ENCODE measurements at regions of chr13 and their contacts with region 1.

Region 1: GRCh38 chr13:24053519-24054251 is 106.8 kb upstream of the SPATA13 start:
- DNase-seq: peak; percentile 40 to 72
- ATAC-seq: peak; percentile 96 to 99
- H3K4me3 ChIP-seq: no peak overlapping the region
- H3K27ac ChIP-seq: peak overlapping the region in 1 of 2 experiments; percentile 46; a peak in 1 of 6 replicates
- H3K4me1 ChIP-seq: peaks cover 12% of the 10 kb centered on the region
- CTCF ChIP-seq: peak; percentile 59
- EP300 ChIP-seq: no peak
- POLR2A ChIP-seq: no peak
- RAD21 ChIP-seq: peak; percentile 83 to 86

Region 2: GRCh38 chr13:23828866-23829265 is 224.8 kb before region 1 on chr13:
- CTCF ChIA-PET with region 1: no interaction called
- POLR2A ChIA-PET with region 1: no interaction called
- DNase-seq: no peak
- ATAC-seq: no peak
- H3K4me3 ChIP-seq: no peak overlapping the region
- H3K27ac ChIP-seq: no peak overlapping the region
- H3K4me1 ChIP-seq: no peaks in the 10 kb centered on the region
- CTCF ChIP-seq: no peak
- EP300 ChIP-seq: no peak
- POLR2A ChIP-seq: no peak
- RAD21 ChIP-seq: no peak

Region 3: DNA sequence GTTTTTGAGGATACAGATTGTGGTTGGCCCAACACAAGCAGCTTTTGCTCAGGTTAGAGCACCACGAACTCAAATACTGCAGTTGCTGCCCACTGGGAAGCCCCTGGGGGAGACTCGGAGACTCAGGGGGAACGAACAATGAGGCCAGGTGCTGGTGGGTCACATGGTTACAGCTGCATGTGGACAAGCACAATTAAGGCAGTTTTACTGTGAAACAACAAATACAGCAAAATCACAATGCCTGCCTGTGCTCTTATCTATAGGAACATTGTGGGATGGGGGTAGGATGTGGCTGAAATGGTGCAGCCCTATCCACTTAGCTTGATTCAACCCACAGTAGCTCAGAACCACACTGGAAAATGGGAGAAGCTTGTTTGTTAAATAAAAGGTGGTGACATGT is 12.8 kb before region 1 on chr13:
- CTCF ChIA-PET with region 1: interaction called, 18 read pairs
- POLR2A ChIA-PET with region 1: no interaction called
- DNase-seq: no peak
- ATAC-seq: no peak
- H3K4me3 ChIP-seq: no peak overlapping the region
- H3K27ac ChIP-seq: no peak overlapping the region
- H3K4me1 ChIP-seq: peaks cover 4% of the 10 kb centered on the region; the same call in 1 of the 3 replicates
- CTCF ChIP-seq: no peak
- EP300 ChIP-seq: no peak
- POLR2A ChIP-seq: no peak
- RAD21 ChIP-seq: no peak

Region 4: GRCh38 chr13:24220086-24220703 is 166.5 kb after region 1 on chr13:
- CTCF ChIA-PET with region 1: interaction called, 42 read pairs
- POLR2A ChIA-PET with region 1: no interaction called
- DNase-seq: peak; percentile 46 to 76
- ATAC-seq: peak; percentile 90 to 94
- H3K4me3 ChIP-seq: no peak overlapping the region
- H3K27ac ChIP-seq: peak overlapping the region; percentile 72 to 83
- H3K4me1 ChIP-seq: peaks cover 58% of the 10 kb centered on the region
- CTCF ChIP-seq: peak; percentile 80
- EP300 ChIP-seq: no peak
- POLR2A ChIP-seq: no peak
- RAD21 ChIP-seq: peak; percentile 90 to 91

Region 5: DNA sequence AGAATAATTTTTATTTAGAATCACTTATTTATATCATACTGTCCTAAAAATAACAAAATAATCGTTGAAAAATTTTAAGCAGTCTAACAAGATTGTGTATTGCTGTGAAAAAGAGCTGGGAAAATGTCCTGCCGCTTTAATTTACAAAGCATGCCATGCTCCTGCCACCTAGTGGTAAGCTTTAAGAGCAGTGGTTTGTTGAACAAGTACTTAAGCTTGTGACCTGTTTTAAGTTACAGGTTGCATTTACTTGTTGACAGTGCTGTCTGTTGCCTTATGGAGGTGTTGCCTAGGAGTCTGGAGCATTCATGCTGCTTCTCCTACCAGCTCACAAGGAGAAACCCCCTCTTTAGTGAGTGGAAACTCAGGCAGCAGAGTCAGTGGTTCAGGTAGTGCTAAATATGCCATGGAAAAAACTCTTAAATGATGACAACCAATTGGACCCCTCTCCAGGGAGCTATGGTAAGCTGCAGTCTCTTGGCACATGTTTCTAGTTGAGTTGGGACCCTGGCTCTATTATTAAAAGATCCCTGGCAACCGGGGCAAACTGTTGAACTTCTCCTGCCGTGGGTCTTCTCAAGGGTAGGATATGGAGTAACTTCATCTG is 175.3 kb after region 1 on chr13:
- CTCF ChIA-PET with region 1: interaction called, 22 read pairs
- POLR2A ChIA-PET with region 1: no interaction called
- DNase-seq: peak; percentile 34 to 72
- ATAC-seq: peak; percentile 64 to 67; a peak in 4 of 6 replicates
- H3K4me3 ChIP-seq: no peak overlapping the region
- H3K27ac ChIP-seq: no peak overlapping the region
- H3K4me1 ChIP-seq: no peaks in the 10 kb centered on the region
- CTCF ChIP-seq: peak; percentile 74
- EP300 ChIP-seq: no peak
- POLR2A ChIP-seq: no peak
- RAD21 ChIP-seq: peak; percentile 67 to 71

Region 6: DNA sequence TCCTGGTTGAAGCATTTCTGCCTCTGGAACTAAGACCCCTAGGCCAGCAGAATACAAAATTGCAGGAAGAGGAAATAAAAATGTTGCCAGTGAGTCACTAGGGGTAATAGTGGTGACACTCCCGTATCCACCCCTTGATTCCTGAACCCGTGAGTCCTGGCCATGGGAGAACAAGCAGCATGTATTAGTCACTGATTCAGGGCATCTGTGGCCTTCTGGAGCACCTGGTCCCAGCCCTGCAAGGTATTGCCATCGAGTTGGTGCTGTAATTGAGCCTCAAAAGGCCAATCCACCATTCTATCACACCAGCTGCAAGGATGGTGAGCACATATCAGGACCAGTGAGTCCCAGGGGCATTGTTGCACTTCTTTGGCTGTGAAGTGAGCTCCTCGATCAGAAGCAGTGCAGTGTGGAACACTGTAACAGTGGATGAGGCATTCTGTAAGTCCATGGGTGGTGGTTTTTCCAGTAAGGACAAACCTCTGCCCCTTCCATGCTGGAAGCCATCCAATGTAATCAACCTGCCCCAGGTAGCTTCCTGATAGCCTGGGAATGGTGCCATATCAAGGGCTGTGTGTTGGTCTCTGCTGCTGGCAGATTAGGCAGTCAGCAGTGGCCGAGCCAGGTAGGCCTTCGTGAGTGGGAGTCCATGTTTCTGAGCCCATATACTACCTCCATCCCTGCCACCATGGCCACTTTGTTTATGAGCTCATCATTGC is 295.3 kb after region 1 on chr13:
- CTCF ChIA-PET with region 1: no interaction called
- POLR2A ChIA-PET with region 1: no interaction called
- DNase-seq: peak in 1 of 2 experiments; percentile 12
- ATAC-seq: 0 out of 6 replicates have a peak, but pooled peaks of 1 of the 2 experiments have one; percentile 50
- H3K4me3 ChIP-seq: no peak overlapping the region
- H3K27ac ChIP-seq: no peak overlapping the region
- H3K4me1 ChIP-seq: no peaks in the 10 kb centered on the region
- CTCF ChIP-seq: no peak
- EP300 ChIP-seq: no peak
- POLR2A ChIP-seq: no peak
- RAD21 ChIP-seq: no peak

Measured in A549 (cell line).